Activated CD4-positive, alpha-beta T cell treated with anti-CD3 and anti-CD28 coated beads, Interleukin-2, amount 10 ng/mL, durations not matched to agents 24 days and 14 days (primary cell): ENCODE measurements at regions of chr3 and their contacts with region 1.

Region 1: GRCh38 chr3:8970971-8971589 is 7.8 kb upstream of the RAD18 start:
- DNase-seq: peak; percentile 93
- H3K4me3 Mint-ChIP-seq: no peak overlapping the region
- H3K27ac Mint-ChIP-seq: no peak overlapping the region
- H3K4me1 Mint-ChIP-seq: peaks cover 5% of the 10 kb centered on the region
- H3K27me3 Mint-ChIP-seq: peaks cover 6% of the 10 kb centered on the region

Region 2: GRCh38 chr3:8579096-8579495 is 392.0 kb before region 1 on chr3:
- intact Hi-C with region 1: no loop called
- DNase-seq: no peak
- H3K4me3 Mint-ChIP-seq: no peak overlapping the region
- H3K27ac Mint-ChIP-seq: no peak overlapping the region
- H3K4me1 Mint-ChIP-seq: no peaks in the 10 kb centered on the region
- H3K27me3 Mint-ChIP-seq: no peaks in the 10 kb centered on the region

Region 3: DNA sequence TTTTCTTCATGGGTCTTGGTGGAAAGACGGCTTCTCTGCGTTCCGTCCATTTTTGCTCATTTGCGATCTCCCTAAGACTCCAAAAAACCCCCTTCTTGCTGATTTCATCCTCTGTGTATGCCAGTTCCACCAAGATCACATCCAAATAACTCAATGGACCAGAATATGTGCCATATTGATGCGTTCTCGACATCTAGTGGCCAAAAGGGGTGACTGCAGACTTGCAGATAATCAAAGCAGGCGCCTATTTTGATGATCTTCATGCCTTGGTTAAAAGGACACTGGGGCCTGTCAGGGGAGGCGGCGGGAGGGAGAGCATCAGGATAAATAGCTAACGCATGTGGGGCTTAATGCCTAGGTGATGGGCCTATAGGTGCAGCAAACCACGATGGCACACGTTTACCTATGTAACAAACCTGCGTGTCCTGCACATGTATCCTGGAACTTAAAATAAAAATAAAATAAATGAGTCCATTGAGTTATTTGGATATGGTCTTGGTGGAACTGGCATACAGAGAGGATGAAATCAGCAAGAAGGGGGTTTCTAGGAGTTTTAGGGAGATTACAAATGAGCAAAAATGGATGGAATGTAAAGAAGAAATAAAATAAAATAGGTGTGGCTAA is 96.4 kb after region 1 on chr3:
- intact Hi-C with region 1: loop called (anchors 1 kb)
- DNase-seq: peak; percentile 76
- H3K4me3 Mint-ChIP-seq: no peak overlapping the region
- H3K27ac Mint-ChIP-seq: no peak overlapping the region
- H3K4me1 Mint-ChIP-seq: no peaks in the 10 kb centered on the region
- H3K27me3 Mint-ChIP-seq: peaks cover 1% of the 10 kb centered on the region

Region 4: GRCh38 chr3:9379327-9379726 is 408.2 kb after region 1 on chr3:
- intact Hi-C with region 1: no loop called
- DNase-seq: no peak
- H3K4me3 Mint-ChIP-seq: no peak overlapping the region
- H3K27ac Mint-ChIP-seq: no peak overlapping the region
- H3K4me1 Mint-ChIP-seq: peaks cover 10% of the 10 kb centered on the region
- H3K27me3 Mint-ChIP-seq: no peaks in the 10 kb centered on the region

Region 5: DNA sequence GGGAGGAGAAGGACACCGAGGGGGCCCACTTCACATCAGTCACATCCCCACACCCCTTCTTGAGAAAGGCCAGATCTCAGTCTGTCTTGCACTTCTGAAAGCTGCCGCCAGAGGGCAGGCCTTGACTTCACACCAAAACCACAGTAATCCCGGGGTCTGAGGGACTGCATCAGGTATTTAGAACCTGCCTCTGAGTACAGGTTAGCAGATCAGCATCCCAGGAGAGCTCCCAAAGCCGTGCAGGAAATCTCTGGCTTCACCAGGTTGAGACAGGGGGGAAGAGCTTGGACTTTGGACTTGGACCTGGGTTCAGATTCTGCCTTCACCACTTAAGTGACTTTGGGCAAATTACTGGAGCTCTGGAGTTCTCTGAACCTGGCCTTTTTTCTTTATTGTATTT is 532.2 kb after region 1 on chr3:
- intact Hi-C with region 1: loop called (anchors 10 kb)
- DNase-seq: peak; percentile 92
- H3K4me3 Mint-ChIP-seq: no peak overlapping the region
- H3K27ac Mint-ChIP-seq: no peak overlapping the region
- H3K4me1 Mint-ChIP-seq: peaks cover 7% of the 10 kb centered on the region
- H3K27me3 Mint-ChIP-seq: peaks cover 32% of the 10 kb centered on the region